Activated CD4-positive, alpha-beta T cell treated with anti-CD3 and anti-CD28 coated beads, Interleukin-2, amount 10 ng/mL, durations not matched to agents 7 days and 5 days (primary cell): ENCODE measurements at regions of chr22 and their contacts with region 1.

Region 1: GRCh38 chr22:37428649-37429586 is 1.6 kb upstream of the ELFN2 start:
- DNase-seq: peak; percentile 60
- H3K4me3 Mint-ChIP-seq: no peak overlapping the region
- H3K27ac Mint-ChIP-seq: no peak overlapping the region
- H3K4me1 Mint-ChIP-seq: peaks cover 17% of the 10 kb centered on the region
- H3K27me3 Mint-ChIP-seq: peaks cover 53% of the 10 kb centered on the region

Region 2: DNA sequence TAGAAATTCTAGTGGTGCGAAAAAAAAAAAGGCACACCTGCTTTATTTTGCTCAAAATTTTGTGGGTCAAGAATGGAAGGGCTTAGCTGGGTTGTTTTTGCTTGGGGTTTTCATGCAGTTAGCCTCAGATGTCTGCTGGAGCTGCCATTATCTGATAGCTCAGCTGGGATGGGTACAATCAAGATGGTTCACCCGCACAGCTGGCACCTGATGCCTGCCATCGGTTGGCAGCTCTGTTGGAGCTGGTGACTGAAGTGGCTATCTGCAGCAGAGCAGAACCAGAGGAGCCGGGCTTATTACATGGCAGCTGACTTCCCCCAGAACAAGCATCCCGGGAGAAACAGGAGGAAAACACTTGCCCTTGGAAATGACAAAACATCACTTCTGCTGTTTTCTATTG is 10.4 kb after region 1 on chr22:
- CTCF ChIA-PET with region 1: interaction called, 11 read pairs
- POLR2A ChIA-PET with region 1: no interaction called
- DNase-seq: no peak
- H3K4me3 Mint-ChIP-seq: no peak overlapping the region
- H3K27ac Mint-ChIP-seq: no peak overlapping the region
- H3K4me1 Mint-ChIP-seq: peaks cover 6% of the 10 kb centered on the region
- H3K27me3 Mint-ChIP-seq: peaks cover 15% of the 10 kb centered on the region